Activated CD4-positive, alpha-beta memory T cell treated with anti-CD3 and anti-CD28 coated beads for 36 hours (primary cell): ENCODE measurements at regions of chr3 and their contacts with region 1.

Region 1: DNA sequence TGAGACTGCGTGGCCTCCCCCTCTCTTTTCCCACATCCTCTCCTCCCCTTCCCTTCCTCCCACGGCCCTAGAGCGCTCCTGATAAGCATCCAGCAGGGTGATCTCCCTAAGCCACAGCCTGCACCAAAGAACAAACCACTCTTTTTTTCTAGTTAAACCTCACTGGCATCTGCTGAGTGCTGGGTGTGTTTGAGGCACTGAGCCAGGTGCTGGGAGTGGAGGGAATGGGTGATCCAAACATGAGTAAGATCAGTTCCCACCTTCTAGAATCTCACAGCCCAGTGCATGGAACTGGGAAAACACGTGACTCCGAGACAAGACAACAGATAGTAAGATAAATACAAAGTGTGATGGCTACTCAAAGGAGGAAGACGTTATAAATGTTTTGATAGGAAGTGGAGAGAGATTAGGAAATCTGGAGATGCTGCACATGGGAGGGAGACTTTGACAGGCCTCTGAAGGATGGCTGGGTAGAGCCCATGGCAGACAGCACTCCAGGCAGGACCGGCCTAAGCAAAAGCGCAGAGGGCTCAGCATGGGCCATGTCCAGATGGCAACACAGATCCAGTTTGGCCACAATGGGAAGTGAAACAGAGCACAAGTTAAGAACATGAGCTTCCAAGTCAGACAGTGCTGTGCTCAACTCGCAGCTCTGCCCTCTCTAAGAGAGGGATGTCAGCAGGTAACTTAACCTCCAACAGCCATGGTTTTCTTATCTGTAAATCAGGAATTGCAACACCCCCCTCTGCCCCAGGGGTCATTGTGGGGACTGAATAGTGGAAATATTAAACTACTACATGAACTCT is 55.6 kb downstream of the CCR3 start:
- DNase-seq: no peak
- H3K4me3 Mint-ChIP-seq: no peak overlapping the region
- H3K27ac Mint-ChIP-seq: no peak overlapping the region
- H3K4me1 Mint-ChIP-seq: peaks cover 89% of the 10 kb centered on the region
- H3K27me3 Mint-ChIP-seq: peaks cover 8% of the 10 kb centered on the region

Region 2: DNA sequence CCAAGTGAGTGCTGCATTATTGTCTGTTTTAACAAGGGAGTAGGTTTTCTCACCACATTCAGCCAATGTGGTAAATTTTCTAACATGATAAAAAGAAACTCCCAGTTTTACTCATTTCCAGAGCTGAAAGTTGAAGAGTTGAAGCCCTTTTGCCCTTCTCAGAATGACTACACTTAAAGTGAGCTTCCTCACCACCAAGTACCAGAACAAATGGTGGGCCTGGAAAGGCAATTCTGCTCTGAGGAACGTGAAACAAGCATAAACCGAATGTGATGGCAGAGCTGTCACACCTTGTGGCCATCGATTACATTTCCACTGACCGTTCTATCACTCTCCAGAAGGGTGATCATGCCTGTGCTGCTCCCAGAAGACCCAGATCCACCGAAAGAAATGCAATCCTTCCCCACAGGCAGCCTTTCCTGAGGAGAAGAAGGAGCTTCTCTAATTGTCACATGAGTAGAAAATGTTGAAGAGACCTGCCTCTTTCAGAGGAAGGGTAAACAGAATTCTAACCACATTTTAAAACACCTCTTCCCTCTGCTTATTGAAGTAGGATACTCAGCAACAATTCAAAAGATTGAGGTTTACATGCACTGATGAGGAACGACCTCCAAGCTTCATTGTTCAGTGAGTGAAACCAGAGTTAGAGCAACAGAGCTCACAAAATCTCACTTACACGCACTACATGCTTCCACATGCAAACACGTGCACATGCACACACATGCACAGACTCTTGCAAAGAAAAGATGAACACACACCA is 432.9 kb before region 1 on chr3:
- CTCF ChIA-PET with region 1: no interaction called
- POLR2A ChIA-PET with region 1: no interaction called
- intact Hi-C with region 1: loop called (anchors 2 kb)
- DNase-seq: peak; percentile 50
- H3K4me3 Mint-ChIP-seq: no peak overlapping the region
- H3K27ac Mint-ChIP-seq: no peak overlapping the region
- H3K4me1 Mint-ChIP-seq: peaks cover 51% of the 10 kb centered on the region
- H3K27me3 Mint-ChIP-seq: peaks cover 60% of the 10 kb centered on the region

Region 3: GRCh38 chr3:45958321-45958791 is 339.5 kb before region 1 on chr3:
- CTCF ChIA-PET with region 1: no interaction called
- POLR2A ChIA-PET with region 1: no interaction called
- intact Hi-C with region 1: loop called (anchors 5 kb)
- DNase-seq: no peak
- H3K4me3 Mint-ChIP-seq: no peak overlapping the region
- H3K27ac Mint-ChIP-seq: no peak overlapping the region
- H3K4me1 Mint-ChIP-seq: peaks cover 28% of the 10 kb centered on the region
- H3K27me3 Mint-ChIP-seq: no peaks in the 10 kb centered on the region

Region 4: GRCh38 chr3:46110701-46111493 is 187.0 kb before region 1 on chr3:
- CTCF ChIA-PET with region 1: no interaction called
- POLR2A ChIA-PET with region 1: no interaction called
- intact Hi-C with region 1: no loop called
- DNase-seq: no peak
- H3K4me3 Mint-ChIP-seq: no peak overlapping the region
- H3K27ac Mint-ChIP-seq: no peak overlapping the region
- H3K4me1 Mint-ChIP-seq: peaks cover 22% of the 10 kb centered on the region
- H3K27me3 Mint-ChIP-seq: peaks cover 2% of the 10 kb centered on the region

Region 5: GRCh38 chr3:46266598-46266997 is 31.3 kb before region 1 on chr3:
- CTCF ChIA-PET with region 1: interaction called, 10 read pairs
- POLR2A ChIA-PET with region 1: interaction called, 7 read pairs
- intact Hi-C with region 1: loop called (anchors 1 kb)
- DNase-seq: no peak
- H3K4me3 Mint-ChIP-seq: no peak overlapping the region
- H3K27ac Mint-ChIP-seq: no peak overlapping the region
- H3K4me1 Mint-ChIP-seq: peaks cover 27% of the 10 kb centered on the region
- H3K27me3 Mint-ChIP-seq: peaks cover 18% of the 10 kb centered on the region

Region 6: DNA sequence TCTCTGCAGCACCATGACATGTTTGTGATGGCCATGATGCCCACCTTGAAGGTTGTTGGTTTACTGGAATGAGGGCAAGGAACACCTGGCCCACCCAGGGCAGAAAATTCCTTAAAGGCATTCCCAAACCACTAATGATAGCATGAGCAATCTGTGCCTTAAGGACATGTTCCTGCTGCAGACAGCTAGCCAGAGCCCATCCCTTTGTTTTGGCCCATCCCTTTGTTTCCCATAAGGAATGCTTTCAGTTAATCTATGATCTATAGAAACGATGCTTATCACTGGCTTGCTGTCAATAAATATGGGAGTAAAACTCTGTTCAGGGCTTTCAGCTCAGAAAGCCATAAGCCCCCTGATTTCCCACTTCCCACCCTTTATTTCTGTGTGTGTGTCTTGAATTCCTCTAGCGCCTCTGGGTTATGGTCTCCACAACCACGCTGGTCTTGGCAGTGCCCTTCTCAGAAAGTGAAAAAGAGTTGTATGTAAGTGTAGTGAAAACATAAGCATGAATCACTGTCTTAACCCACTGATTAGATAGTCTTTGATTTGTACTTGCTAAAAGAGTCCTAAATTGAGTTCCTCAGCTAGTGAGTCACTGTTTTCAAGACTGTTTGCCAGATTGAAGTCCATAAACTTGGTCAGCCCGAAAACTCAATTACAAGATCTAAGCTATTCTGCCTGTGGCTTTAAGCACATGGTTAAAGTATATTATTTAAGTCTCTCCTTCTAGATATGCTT is 37.0 kb after region 1 on chr3:
- CTCF ChIA-PET with region 1: no interaction called
- POLR2A ChIA-PET with region 1: interaction called, 9 read pairs
- intact Hi-C with region 1: loop called (anchors 1 kb)
- DNase-seq: peak; percentile 30
- H3K4me3 Mint-ChIP-seq: no peak overlapping the region
- H3K27ac Mint-ChIP-seq: no peak overlapping the region
- H3K4me1 Mint-ChIP-seq: peaks cover 8% of the 10 kb centered on the region
- H3K27me3 Mint-ChIP-seq: peaks cover 16% of the 10 kb centered on the region

Region 7: DNA sequence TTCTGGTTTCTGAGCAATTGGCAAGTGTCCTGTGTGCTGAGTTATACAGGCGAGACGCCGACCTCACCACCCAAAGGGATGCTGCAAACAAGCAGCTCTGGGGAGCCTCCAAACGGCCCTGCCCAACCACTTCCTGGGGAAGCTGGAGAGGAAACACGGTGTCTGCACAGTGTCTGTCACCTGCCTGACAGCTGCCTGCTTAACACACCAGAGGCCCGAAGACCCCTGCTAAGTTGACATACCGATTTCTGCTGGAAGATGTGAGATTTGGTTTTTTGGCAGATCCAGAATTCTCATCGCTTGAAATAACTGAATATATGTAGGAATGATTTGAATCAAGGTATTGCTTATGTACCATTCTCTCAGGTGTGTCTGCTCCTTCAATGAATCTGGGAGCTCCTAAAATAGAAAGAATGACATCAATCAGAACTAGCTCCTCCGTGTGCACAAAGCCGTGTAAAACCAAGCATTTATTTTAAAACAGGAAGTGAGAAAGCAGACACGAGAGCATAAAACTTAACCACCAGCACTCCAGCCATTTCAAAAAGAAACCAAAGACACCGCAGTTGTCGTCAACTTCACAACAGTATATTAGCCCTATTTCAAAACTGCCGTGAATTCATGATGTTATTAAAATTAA is 241.1 kb after region 1 on chr3:
- CTCF ChIA-PET with region 1: no interaction called
- POLR2A ChIA-PET with region 1: no interaction called
- intact Hi-C with region 1: loop called (anchors 5 kb)
- DNase-seq: peak; percentile 87
- H3K4me3 Mint-ChIP-seq: peak overlapping the region; percentile 63
- H3K27ac Mint-ChIP-seq: peak overlapping the region; percentile 79
- H3K4me1 Mint-ChIP-seq: peaks cover 57% of the 10 kb centered on the region
- H3K27me3 Mint-ChIP-seq: no peaks in the 10 kb centered on the region